Prostate gland (tissue), 2 donors: ENCODE measurements at regions of chr2 and their contacts with region 1.

Region 1: GRCh38 chr2:56009758-56010458 is 86.3 kb upstream of the EFEMP1 start:
- DNase-seq: no peak
- H3K4me3 ChIP-seq: no peak overlapping the region
- H3K27ac ChIP-seq: no peak overlapping the region
- H3K4me1 ChIP-seq: no peaks in the 10 kb centered on the region
- H3K27me3 ChIP-seq: no peaks in the 10 kb centered on the region
- CTCF ChIP-seq: peak; percentile 30 to 63 (median 50)
- POLR2A ChIP-seq: no peak

Region 2: DNA sequence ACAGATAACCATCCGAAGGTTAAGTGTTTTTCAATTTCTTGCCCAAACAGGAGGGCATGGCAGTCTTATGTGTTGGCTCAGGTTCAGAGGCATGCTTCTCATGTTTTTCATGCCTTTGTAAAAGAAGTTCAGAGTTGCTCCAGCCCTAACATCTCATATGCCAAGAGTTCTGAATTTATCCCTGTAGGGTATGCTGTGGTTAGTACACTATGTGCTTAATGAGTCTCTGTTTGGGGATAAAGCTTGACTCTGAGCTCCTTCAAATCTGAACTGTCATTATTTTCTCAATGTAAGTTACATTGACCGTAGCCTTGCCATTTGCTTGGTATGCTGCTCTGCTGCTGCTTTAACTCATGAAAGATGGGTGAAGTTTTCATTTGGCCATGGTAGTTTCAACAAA is 248.4 kb before region 1 on chr2:
- intact Hi-C with region 1: loop called (anchors 10 kb)
- DNase-seq: peak; percentile 28
- H3K4me3 ChIP-seq: no peak overlapping the region
- H3K27ac ChIP-seq: peak overlapping the region in 1 of 2 donors; percentile 1
- H3K4me1 ChIP-seq: no peaks in the 10 kb centered on the region
- H3K27me3 ChIP-seq: no peaks in the 10 kb centered on the region
- CTCF ChIP-seq: no peak
- POLR2A ChIP-seq: no peak